Activated B cell treated with CpG ODN at 0.5 μM for 24 hours (primary cell): ENCODE measurements at regions of chr3 and their contacts with region 1.

Region 1: GRCh38 chr3:126389112-126389793 is 5.5 kb upstream of the CFAP100 start:
- DNase-seq: peak; percentile 50
- ATAC-seq: peak; percentile 95
- H3K4me3 Mint-ChIP-seq: peak overlapping the region; percentile 53
- H3K27ac Mint-ChIP-seq: no peak overlapping the region
- H3K4me1 Mint-ChIP-seq: peaks cover 15% of the 10 kb centered on the region
- H3K27me3 Mint-ChIP-seq: peaks cover 46% of the 10 kb centered on the region
- CTCF ChIP-seq: no peak

Region 2: GRCh38 chr3:125767641-125768040 is 621.6 kb before region 1 on chr3:
- CTCF ChIA-PET with region 1: no interaction called
- POLR2A ChIA-PET with region 1: no interaction called
- intact Hi-C with region 1: loop called (anchors 5 kb)
- DNase-seq: no peak
- ATAC-seq: no peak
- H3K4me3 Mint-ChIP-seq: peak overlapping the region; percentile 24
- H3K27ac Mint-ChIP-seq: no peak overlapping the region
- H3K4me1 Mint-ChIP-seq: peaks cover 8% of the 10 kb centered on the region
- H3K27me3 Mint-ChIP-seq: peaks cover 12% of the 10 kb centered on the region
- CTCF ChIP-seq: no peak

Region 3: GRCh38 chr3:125967138-125967537 is 422.1 kb before region 1 on chr3:
- CTCF ChIA-PET with region 1: no interaction called
- POLR2A ChIA-PET with region 1: no interaction called
- intact Hi-C with region 1: loop called (anchors 2 kb)
- DNase-seq: no peak
- ATAC-seq: no peak
- H3K4me3 Mint-ChIP-seq: no peak overlapping the region
- H3K27ac Mint-ChIP-seq: no peak overlapping the region
- H3K4me1 Mint-ChIP-seq: peaks cover 4% of the 10 kb centered on the region
- H3K27me3 Mint-ChIP-seq: peaks cover 16% of the 10 kb centered on the region
- CTCF ChIP-seq: no peak

Region 4: DNA sequence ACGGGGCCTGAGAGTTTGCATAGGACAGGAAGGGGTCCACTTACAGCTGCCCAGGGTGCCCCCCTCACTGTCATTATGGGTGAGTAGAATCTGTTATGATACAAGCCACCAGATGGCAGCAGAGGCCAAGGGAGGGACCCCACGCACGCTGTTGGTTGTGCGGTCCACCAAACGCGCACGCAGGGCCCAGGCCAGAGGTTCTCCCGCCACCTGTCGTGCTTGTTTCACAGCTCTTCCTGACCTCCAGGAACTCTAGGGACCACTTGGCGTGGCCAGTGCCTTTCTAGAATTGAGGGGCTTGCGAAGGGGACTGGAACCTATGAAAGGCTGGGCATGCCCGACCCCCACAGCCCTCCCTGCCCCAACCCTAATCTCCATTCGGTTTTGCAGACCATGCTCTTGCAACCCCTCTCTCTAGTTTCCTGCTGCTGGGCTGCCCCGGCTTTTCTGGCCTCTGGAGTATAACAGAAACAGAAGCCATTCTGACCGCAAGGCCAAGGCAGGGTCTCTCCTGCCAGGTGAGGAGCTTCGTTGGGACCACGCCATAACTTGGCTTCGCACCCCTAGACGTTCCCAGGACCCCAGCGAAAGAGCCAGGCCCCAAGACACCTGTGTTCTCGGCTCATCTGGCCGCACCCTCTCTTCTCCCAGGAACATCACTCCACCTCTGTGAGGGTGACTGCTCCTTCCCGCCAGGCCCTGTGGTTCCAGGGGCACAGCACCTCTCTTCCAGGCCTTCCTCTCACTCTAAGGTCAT is 254.9 kb before region 1 on chr3:
- CTCF ChIA-PET with region 1: interaction called, 16 read pairs
- POLR2A ChIA-PET with region 1: no interaction called
- intact Hi-C with region 1: no loop called
- DNase-seq: peak; percentile 26
- ATAC-seq: peak; percentile 58
- H3K4me3 Mint-ChIP-seq: no peak overlapping the region
- H3K27ac Mint-ChIP-seq: no peak overlapping the region
- H3K4me1 Mint-ChIP-seq: no peaks in the 10 kb centered on the region
- H3K27me3 Mint-ChIP-seq: peaks cover 18% of the 10 kb centered on the region
- CTCF ChIP-seq: peak; percentile 64

Region 5: DNA sequence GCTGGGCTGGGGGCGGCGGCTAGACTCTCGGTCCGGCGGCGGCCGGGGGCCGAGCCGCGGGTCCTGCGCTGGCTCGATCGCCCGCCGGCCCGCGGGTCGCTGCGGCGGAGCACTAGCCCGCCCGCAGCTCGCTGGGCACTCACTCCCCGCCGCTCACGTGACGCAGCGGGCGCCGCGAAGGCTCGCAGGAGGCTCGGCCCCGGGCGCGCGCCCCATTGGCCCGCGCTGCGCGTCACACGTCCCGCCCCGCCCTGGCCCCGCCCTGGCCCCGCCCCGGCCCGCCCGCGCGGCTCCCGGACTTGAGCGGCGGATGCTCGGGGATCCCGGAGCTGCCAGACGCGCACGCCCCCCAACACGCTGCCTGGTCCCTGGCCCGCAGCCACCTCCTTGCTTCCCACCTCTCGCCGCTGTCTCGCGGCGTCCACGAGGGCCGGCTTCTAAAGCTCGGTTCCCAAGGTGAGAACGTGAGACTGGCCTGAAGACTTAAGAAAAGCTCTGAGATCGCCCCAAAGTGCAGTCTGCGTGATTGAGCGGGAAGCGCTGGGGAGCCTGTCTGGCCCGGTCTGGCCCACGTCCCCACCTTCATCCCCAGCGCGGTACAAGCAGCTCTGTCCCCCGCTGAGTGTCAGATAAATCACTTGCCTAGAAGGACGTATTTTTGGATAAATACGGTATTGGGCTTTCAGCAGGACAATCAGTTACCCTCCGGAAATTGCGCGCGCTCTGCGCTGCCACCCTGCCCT is 31.8 kb before region 1 on chr3 and contains the start of gene KLF15:
- CTCF ChIA-PET with region 1: no interaction called
- POLR2A ChIA-PET with region 1: no interaction called
- intact Hi-C with region 1: loop called (anchors 1 kb)
- DNase-seq: peak; percentile 76
- ATAC-seq: peak; percentile 93
- H3K4me3 Mint-ChIP-seq: peak within 1 kb of the TSS; percentile 88
- H3K27ac Mint-ChIP-seq: no peak within 1 kb of the TSS
- H3K4me1 Mint-ChIP-seq: peaks cover 16% of the 10 kb centered on the region
- H3K27me3 Mint-ChIP-seq: peaks cover 35% of the 10 kb centered on the region
- CTCF ChIP-seq: no peak
- total RNA-seq, gene KLF15: 0.31 and 0.39 TPM in 2 replicates